Posterior vena cava (tissue), 2 donors: ENCODE measurements at regions of chr3 and their contacts with region 1.

Region 1: GRCh38 chr3:15332405-15333098 is at the start of gene SH3BP5:
- DNase-seq: peak; percentile 95
- total RNA-seq, gene SH3BP5: 67.9 to 105 TPM

Region 2: DNA sequence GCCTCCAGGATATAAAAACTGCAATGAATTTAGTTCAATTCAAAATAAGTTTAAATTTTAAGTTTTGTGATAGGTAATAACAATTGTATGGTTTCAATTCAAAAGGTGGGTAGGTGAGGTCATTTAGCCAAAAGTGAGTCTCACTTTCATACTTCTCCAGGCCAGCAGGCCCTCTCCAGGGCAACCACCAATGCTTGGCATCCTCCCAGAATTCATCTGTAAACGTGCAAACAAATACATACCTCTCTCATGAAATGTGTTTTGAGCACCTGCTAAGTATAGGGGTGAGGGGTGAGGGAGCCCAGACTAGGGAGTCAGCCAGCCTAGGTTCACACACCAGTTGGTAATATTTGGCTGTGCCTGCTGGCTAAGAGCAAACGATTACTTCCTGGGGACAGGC is 211.6 kb before region 1 on chr3:
- intact Hi-C with region 1: no loop called
- DNase-seq: no peak

Region 3: GRCh38 chr3:15268033-15268631 is 64.4 kb before region 1 on chr3:
- intact Hi-C with region 1: loop called (anchors 5 kb)
- DNase-seq: peak; percentile 96

Region 4: DNA sequence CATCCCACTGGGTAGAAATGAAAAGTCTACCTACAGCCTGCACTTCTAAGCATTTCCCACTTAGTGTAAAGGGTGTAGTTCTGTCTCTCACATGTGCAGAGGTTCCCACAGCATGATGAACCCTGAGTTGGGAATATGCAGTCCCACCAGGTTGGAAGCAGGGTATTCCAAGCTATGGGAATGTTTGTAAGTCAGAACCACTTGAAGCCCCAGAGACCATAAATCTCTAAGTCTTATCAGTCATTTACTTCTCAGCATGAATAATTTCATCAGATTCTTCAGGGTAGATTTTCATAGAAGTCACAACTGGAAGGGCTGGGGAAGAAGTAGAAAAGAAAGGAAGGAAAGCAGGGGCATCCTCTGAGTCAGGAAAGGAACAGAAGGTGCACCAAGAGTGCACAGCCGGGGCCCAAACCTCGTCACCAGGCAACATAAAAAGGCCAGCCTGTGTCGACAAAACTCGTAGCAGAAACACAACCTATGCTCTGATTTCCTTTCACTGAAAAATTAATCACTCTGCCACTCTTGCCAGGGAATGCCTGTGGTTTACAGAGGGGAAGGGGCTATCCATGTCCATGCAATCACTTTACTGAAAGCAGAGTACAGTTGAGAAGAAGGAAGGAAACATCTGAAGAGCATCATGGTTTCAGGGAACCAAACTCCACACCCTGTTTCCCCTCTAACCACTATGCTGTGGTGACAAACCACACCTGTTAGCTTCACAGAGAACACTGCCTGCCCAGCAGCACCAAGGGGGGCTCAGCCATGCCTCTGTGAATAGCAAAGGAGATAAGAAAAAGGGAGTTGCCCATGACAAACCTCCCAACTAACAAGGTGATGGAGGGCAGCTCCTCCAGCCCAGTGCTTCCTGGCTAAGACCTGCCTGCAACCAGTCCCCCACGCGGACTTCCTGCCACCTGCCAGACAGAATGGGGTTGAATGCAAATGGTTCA is 40.7 kb before region 1 on chr3:
- intact Hi-C with region 1: loop called in 1 of 2 experiments (anchors 2 kb)
- DNase-seq: peak; percentile 79

Region 5: GRCh38 chr3:16270855-16271254 is 938.3 kb after region 1 on chr3:
- intact Hi-C with region 1: loop called in 1 of 2 experiments (anchors 5 kb)
- DNase-seq: no peak